Activated naive CD4-positive, alpha-beta T cell treated with anti-CD3 and anti-CD28 coated beads, Interleukin-2, amount 10 ng/mL, durations not matched to agents 7 days and 5 days (primary cell): ENCODE measurements at regions of chr12 and their contacts with region 1.

Region 1: DNA sequence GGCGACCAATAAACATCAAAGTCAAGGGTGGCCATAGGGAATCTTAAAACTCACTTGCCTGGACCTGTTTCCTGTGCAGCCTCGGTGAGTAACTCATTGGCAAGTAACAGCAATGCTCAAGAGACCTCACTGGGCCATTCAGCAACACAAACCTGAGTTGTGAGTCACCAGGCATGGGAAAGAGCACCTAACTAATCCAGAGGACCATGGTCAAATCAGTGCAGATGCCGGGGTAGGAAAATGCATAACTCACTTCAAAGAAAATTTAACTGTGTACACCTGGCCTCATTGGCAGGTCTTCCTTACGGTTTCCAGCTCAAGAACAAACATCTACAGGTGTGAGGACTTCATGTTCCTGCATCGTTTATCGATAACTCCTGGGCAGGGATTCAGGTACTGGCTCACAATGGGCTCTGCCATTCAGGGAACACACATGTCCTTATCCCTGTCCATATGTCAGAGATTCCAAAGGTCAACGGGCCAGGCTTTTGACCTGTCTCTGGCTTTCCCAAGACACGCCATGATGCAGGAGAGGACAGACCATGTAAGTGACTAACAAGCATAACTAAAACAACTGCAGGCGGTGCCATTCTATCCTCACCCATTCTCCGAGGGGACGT is 211.8 kb downstream of the ANO2 start:
- DNase-seq: no peak
- H3K4me3 Mint-ChIP-seq: no peak overlapping the region
- H3K27ac Mint-ChIP-seq: no peak overlapping the region
- H3K4me1 Mint-ChIP-seq: no peaks in the 10 kb centered on the region
- H3K27me3 Mint-ChIP-seq: no peaks in the 10 kb centered on the region

Region 2: GRCh38 chr12:5745265-5745888 is 12.1 kb after region 1 on chr12:
- CTCF ChIA-PET with region 1: interaction called, 20 read pairs
- DNase-seq: peak; percentile 68
- H3K4me3 Mint-ChIP-seq: no peak overlapping the region
- H3K27ac Mint-ChIP-seq: no peak overlapping the region
- H3K4me1 Mint-ChIP-seq: peaks cover 5% of the 10 kb centered on the region
- H3K27me3 Mint-ChIP-seq: peaks cover 7% of the 10 kb centered on the region